Activated naive CD4-positive, alpha-beta T cell treated with anti-CD3 and anti-CD28 coated beads for 36 hours (primary cell): ENCODE measurements at regions of chr2 and their contacts with region 1.

Region 1: GRCh38 chr2:219253753-219254590 is at the start of gene TUBA4A:
- DNase-seq: peak; percentile 89
- H3K4me3 Mint-ChIP-seq: peak within 1 kb of the TSS; percentile 70
- H3K27ac Mint-ChIP-seq: peak within 1 kb of the TSS; percentile 95
- H3K4me1 Mint-ChIP-seq: peaks cover 49% of the 10 kb centered on the region
- H3K27me3 Mint-ChIP-seq: no peaks in the 10 kb centered on the region
- total RNA-seq, gene TUBA4A: 112 to 116 TPM

Region 2: DNA sequence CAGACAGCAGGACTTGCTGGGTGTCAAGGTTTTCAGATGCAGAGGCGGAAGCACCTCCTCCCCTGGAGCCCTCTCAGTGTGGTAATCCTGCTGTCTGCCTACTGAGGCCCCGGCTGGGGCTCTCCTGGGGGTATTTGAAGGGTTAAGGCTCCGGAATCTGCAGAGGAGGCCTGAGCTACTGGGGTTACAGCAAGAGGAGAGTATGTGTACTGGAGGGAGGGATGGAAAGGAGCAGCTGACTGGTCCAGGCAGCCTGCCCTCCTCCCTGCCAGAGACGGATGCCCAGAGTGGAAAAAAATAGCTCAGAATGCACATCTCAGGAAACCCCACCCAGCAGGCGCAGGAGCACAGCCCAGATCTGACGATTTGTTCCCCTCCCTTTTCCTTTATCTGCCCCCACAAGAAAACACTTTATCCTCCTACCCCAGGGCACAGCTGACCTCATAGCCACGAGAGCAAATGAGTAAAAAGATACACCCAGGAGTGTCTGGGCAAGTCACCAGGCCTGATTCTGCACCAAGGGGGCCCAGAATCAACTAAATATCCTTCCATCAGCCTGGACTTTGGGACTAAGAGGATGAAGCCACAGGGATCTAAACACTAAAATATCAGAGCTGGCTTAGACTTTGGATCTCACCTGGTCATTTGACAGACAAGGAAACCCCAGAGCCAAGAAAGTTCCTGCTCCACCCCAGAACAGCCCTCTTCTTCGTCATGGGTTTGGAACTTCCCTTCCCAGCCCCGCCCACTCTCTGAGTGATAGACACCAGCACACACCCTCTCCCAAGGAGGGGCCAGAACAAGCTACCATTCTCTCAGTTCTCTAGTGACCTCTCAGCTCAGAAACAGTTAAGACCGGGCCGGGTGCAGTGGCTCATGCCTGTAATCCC is 967.2 kb before region 1 on chr2:
- CTCF ChIA-PET with region 1: no interaction called
- intact Hi-C with region 1: loop called (anchors 10 kb)
- DNase-seq: peak; percentile 95
- H3K4me3 Mint-ChIP-seq: peak overlapping the region; percentile 80
- H3K27ac Mint-ChIP-seq: peak overlapping the region; percentile 98
- H3K4me1 Mint-ChIP-seq: peaks cover 73% of the 10 kb centered on the region
- H3K27me3 Mint-ChIP-seq: no peaks in the 10 kb centered on the region

Region 3: DNA sequence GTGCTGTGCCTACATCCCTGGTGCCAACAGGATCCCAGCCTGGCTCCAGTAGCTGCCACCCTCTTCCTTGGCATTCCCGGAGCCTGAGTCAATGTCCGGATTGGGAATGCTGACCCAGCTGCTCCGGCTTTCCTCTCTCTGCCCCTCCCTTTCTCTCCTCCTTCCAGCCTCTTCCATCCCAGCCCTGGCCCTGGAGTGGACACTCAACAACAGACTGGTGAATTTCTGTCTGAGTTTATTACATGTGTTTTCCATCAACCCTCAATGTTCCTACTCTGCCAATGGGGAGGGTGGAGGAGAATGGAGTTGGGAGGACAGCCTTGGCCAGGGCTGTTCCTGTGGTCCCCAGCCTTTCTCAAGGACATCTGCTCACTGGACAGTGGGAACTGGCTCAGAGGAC is 421.5 kb before region 1 on chr2:
- CTCF ChIA-PET with region 1: no interaction called
- intact Hi-C with region 1: no loop called
- DNase-seq: no peak
- H3K4me3 Mint-ChIP-seq: no peak overlapping the region
- H3K27ac Mint-ChIP-seq: no peak overlapping the region
- H3K4me1 Mint-ChIP-seq: no peaks in the 10 kb centered on the region
- H3K27me3 Mint-ChIP-seq: peaks cover 28% of the 10 kb centered on the region

Region 4: DNA sequence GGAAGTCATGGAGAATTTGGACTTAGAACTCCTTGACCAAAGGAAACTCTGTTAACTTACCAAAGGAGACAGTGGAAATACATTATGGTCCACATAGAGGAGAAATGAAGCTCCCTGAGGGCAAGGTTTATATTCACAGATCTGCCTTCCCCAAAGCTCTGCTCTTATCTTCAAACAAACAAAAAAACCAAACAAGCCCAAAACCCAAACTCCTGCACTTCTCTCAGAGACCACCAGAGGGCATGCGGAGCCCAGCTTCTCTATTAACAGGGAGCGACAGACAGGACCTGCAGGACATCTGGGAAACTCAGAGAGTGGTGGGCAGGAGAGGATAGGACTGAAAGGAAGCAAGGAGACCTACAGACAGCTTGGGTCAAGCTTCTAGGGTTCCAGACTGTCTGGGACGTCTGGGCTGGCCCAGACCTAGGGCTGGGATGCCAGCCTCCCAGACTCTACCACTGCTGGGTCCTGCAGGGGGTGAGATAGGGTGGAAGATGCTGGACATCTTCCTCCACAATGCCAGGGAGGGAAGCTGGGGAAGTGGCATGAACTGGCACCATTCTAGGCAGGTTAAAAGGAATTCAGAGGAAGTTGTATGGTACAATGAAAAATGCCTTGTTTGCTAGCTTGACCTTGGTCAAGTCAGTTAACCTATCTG is 377.3 kb before region 1 on chr2:
- CTCF ChIA-PET with region 1: no interaction called
- intact Hi-C with region 1: loop called (anchors 5 kb)
- DNase-seq: peak; percentile 86
- H3K4me3 Mint-ChIP-seq: no peak overlapping the region
- H3K27ac Mint-ChIP-seq: no peak overlapping the region
- H3K4me1 Mint-ChIP-seq: peaks cover 39% of the 10 kb centered on the region
- H3K27me3 Mint-ChIP-seq: peaks cover 41% of the 10 kb centered on the region

Region 5: DNA sequence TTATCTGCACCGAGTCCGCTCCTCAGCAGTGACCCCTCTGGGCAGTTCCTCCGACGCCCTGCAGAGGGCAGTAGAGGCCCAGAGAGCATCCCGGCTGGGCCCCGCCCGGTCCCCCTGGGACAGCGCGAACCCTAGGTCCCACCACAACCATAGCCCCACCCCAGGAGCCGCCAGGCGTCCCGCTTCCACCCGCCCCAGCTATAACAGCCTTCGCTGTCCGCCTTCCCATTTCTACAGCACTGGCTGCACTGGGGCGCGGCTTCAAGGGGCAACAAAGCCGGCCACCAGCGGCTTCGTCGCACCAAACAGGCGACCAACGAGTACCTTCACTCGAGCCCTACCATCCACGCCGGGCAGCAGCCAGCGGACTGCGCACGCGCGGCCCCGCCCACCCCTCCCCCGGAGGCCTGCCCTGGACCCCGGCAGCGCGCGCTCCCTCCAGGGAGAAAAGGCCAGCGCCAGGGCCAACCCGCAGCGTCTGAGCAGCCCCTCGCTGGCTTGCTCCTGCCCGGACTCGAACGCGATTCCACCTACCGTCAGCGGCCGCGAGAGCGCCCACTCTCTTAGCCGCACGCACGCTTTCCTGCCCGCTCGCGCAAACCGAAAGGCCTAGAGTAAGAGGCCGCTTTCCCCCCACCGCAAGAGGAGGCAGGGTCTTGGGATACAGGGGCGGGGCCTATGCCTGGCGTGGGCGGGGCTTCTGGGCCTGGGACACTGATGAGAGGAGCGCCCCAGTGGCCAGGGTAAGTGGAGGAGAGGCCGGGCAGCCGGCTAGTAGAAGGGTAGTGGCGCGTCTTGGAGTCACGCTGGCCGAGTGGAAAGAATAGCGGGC is 93.6 kb before region 1 on chr2 and contains the start of gene NHEJ1:
- CTCF ChIA-PET with region 1: interaction called, 5 read pairs
- intact Hi-C with region 1: loop called (anchors 1 kb)
- DNase-seq: peak; percentile 96
- H3K4me3 Mint-ChIP-seq: peak within 1 kb of the TSS; percentile 80
- H3K27ac Mint-ChIP-seq: peak within 1 kb of the TSS; percentile 88
- H3K4me1 Mint-ChIP-seq: peaks cover 13% of the 10 kb centered on the region
- H3K27me3 Mint-ChIP-seq: no peaks in the 10 kb centered on the region
- total RNA-seq, gene NHEJ1: 24.4 to 26.6 TPM

Region 6: DNA sequence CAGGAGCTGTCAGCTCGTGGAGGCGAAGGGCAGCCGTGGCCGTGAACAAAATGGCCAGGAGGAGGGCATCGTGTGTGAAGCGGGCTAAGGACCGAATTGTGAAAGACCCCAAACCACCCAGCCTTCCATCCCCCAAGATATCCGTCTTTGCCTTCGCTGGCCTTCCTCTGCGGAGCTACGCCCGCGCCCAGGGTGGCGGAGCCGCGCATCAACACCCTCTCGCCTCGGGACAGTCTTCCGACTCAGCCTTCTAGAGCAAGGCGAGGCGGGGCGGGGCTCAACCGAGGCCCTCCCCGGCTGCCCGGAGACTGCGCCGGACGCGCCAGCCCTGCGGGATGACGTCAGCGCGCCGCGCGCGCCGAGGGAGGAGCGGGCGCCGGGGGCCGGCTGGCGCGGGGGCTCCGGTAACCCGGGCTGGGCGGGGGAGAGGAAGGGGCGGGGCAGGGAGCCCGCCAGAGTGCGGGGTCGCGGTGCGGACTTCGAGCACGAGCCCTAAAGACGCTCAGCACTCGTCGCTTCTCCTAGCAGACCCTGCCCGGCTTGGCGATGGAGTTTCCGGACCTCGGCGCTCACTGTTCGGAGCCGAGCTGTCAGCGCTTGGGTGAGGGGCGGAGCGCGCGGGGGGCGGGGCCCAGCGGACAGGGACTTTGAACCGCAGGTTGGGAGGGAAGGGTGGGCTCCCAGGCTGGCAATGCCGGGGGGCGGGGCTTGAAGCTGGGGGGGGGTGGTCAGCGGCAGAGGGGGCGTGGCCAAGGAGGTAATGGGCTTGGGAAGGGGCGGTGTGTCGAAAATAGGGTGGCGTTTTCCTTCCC is 47.3 kb before region 1 on chr2 and contains the start of gene ZFAND2B:
- CTCF ChIA-PET with region 1: interaction called, 4 read pairs
- intact Hi-C with region 1: loop called (anchors 1 kb)
- DNase-seq: peak; percentile 94
- H3K4me3 Mint-ChIP-seq: peak within 1 kb of the TSS; percentile 94
- H3K27ac Mint-ChIP-seq: peak within 1 kb of the TSS; percentile 96
- H3K4me1 Mint-ChIP-seq: peaks cover 32% of the 10 kb centered on the region
- H3K27me3 Mint-ChIP-seq: no peaks in the 10 kb centered on the region
- total RNA-seq, gene ZFAND2B: 32.6 to 33.6 TPM

Region 7: DNA sequence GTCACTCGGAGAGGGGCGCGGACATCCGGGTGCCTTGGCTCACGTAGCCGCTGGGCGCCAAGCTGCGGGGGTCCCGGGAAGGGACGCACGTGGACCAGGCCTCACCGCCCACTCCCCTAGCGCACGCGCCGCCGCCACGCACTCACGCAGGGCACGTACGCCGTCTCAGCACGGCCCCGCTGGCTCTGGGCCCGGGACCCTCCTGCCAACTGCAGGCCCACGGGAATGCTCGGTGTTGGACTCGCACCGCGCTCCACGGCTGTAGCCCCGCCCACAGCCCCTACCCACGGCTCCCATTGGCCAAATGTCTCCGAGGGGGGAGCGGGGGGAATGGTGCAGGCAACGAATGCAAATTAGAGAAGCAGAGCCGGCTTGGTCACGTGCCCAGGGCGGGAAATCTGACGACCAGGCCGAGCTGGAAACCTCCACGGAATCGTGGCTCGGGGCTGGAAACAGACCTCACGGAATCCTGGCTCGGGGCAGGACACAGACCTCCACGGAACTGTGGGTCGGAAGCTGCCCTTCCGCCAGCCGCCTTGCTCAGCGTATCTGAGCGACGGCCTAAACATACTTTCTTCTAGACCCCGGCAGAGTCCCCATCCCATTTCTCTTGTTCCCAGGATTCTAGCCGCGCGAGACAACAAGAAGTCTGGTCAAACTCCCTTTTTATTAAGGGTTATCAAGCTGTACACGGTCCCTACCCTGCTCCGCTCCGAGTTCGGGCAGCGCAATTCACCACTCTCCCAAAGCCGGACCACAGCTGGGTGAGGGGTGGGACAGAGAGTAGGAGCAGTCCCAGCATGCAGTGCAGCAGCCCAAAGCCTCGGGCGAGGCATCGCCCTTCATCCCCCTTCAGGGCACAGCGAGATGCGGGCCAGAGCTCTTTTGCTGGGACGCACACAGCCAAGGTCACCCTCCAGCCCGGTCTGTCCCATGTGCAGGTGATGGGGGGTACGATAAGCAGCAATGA is 35.0 kb before region 1 on chr2 and contains the start of gene ABCB6:
- CTCF ChIA-PET with region 1: no interaction called
- intact Hi-C with region 1: loop called (anchors 1 kb)
- DNase-seq: peak; percentile 89
- H3K4me3 Mint-ChIP-seq: peak within 1 kb of the TSS; percentile 78
- H3K27ac Mint-ChIP-seq: peak within 1 kb of the TSS; percentile 56
- H3K4me1 Mint-ChIP-seq: peaks cover 25% of the 10 kb centered on the region
- H3K27me3 Mint-ChIP-seq: no peaks in the 10 kb centered on the region
- total RNA-seq, gene ABCB6: 7.0 to 7.5 TPM

Region 8: DNA sequence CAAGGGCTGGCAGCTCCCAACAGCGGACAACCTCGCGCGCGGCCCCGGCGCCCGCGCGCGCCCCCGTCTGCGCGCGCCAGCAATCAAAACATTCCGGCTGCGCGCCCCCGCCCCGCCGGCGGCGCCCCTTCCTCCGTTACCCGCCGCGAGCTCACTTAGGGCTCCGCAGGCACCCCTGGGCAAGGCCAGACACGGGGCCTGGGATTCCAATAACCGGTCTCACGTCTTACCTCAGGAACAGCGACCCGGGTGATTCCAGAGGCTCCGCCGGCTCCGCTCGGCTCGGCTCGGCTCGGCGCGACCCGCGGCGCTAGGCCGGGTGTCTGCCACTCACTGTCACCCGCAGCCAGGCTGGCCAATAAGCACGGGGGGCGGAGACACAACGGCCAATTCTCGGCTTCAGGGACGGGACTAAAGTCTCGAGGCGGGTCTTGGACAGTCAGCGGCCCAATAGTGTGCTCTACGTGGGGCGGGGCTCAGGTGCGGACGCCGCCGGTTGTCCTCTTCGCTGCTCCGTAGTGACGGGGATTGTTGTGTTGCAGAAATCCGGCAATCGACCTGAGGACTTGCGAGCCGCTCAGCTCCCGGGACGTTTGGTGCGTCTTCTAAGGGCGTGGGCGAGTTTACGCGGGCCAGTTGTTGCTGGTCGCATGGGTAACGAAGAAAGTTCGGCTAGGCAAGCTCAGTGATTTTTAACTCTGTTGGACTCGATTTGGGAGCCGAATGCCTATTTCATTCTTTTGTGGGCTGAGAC is 24.5 kb before region 1 on chr2 and contains the starts of genes ANKZF1 and ATG9A:
- CTCF ChIA-PET with region 1: interaction called, 4 read pairs
- intact Hi-C with region 1: loop called (anchors 1 kb)
- DNase-seq: peak; percentile 99
- H3K4me3 Mint-ChIP-seq: peak within 1 kb of the TSS; percentile 96
- H3K27ac Mint-ChIP-seq: peak within 1 kb of the TSS; percentile 97
- H3K4me1 Mint-ChIP-seq: peaks cover 48% of the 10 kb centered on the region
- H3K27me3 Mint-ChIP-seq: no peaks in the 10 kb centered on the region
- total RNA-seq, gene ANKZF1: 87.7 to 88.5 TPM
- total RNA-seq, gene ATG9A: 26.0 to 27.7 TPM

Region 9: DNA sequence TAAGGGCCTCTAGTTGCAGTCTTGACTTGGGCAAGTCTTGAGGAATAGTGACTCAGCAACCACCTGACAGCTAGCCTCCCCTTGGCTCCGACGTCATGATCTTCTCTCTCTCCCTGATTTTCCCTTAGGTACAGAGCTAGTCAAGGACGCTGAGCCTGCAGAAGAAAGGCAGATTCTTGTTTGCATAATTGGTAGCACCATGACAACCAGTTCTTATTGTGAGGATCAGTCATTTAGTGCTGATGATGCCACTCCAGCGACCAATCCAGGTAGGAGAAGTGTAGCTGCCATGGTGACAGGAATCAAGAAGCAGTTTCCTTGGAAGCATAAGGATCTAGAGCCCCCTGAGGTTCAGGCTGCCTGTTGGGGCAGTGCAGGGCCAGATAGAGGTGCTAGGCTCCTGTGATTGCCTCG is 81.4 kb after region 1 on chr2:
- CTCF ChIA-PET with region 1: no interaction called
- intact Hi-C with region 1: no loop called
- DNase-seq: no peak
- H3K4me3 Mint-ChIP-seq: no peak overlapping the region
- H3K27ac Mint-ChIP-seq: no peak overlapping the region
- H3K4me1 Mint-ChIP-seq: no peaks in the 10 kb centered on the region
- H3K27me3 Mint-ChIP-seq: peaks cover 40% of the 10 kb centered on the region